ENCODE measurements at regions of chr11 and their contacts with region 1.

Region 1: DNA sequence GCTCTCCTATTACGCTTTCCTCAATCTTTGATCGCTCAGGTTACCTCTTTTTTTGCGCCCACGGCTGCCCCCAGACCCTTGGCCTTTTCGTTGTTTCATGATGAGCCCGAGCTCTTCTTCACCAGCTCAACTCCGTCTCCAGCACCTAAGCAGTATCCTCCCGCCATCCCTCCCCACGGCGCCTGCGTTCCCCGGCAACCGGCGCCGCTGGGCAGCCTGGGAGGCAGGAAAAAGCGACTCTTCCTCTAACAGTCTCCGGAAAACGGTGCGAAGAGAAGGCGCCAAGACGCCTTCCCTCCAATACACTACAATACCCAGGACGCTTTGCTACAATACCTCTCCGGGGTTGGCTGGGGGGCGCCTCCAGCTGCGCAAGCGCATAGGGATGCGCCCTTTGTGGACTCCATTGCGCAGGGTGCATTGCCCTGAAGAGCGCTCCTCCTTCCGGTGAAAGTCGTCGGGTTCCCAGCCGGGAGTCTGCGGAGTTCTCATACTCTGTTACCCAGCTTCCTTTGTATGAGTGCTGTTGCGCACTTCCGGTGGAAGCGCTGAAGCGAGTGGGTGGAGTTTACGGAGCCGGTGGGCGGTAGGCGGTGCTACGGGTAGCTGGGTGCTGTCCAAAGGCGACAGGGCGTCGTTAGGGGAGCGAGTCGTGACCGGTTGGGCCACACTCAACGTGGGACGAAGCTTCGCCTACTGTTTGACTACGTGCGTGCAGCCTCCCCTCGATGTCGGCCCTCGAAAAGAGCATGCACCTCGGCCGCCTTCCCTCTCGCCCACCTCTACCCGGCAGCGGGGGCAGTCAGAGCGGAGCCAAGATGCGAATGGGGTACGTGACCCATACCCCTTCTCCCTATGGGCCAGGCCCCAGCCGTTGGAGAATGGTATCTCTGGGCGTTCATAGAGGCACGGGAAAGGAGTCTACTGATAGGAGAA is at the starts of genes C2CD3 and PPME1:
- DNase-seq: peak; percentile 93 to 99 (median 98)
- ATAC-seq: peak; percentile 94 to 96
- H3K4me3 Mint-ChIP-seq: no peak within 1 kb of the TSS
- H3K27ac Mint-ChIP-seq: no peak within 1 kb of the TSS
- H3K4me1 Mint-ChIP-seq: peaks cover 5 to 29% (median 14%) of the 10 kb centered on the region in 4 donors
- H3K27me3 Mint-ChIP-seq: no peaks in the 10 kb centered on the region
- polyA plus RNA-seq, gene C2CD3: 4.1 to 12.1 (median 6.2) TPM
- polyA plus RNA-seq, gene PPME1: 10.3 to 14.2 (median 10.9) TPM

Region 2: GRCh38 chr11:73982969-73983740 is 187.8 kb before region 1 on chr11:
- POLR2A ChIA-PET with region 1: interaction called, 10 read pairs
- DNase-seq: peak; percentile 86 to 97 (median 92)
- ATAC-seq: peak; percentile 70 to 75
- H3K4me3 Mint-ChIP-seq: peak overlapping the region; percentile 95 to 100 (median 99)
- H3K27ac Mint-ChIP-seq: peak overlapping the region; percentile 98 to 100 (median 100)
- H3K4me1 Mint-ChIP-seq: peaks cover 26 to 59% (median 39%) of the 10 kb centered on the region in 4 donors
- H3K27me3 Mint-ChIP-seq: no peaks in the 10 kb centered on the region

Region 3: GRCh38 chr11:74132833-74133232 is 38.1 kb before region 1 on chr11:
- POLR2A ChIA-PET with region 1: no interaction called
- DNase-seq: no peak
- ATAC-seq: no peak
- H3K4me3 Mint-ChIP-seq: no peak overlapping the region
- H3K27ac Mint-ChIP-seq: no peak overlapping the region
- H3K4me1 Mint-ChIP-seq: no peaks in the 10 kb centered on the region
- H3K27me3 Mint-ChIP-seq: no peaks in the 10 kb centered on the region

Region 4: GRCh38 chr11:74232311-74232950 is 61.5 kb after region 1 on chr11:
- POLR2A ChIA-PET with region 1: interaction called, 12 read pairs
- DNase-seq: peak in 8 of 10 donors; percentile 5 to 70 (median 44)
- ATAC-seq: peak; percentile 98 to 99
- H3K4me3 Mint-ChIP-seq: peak overlapping the region in 8 of 10 donors; percentile 1 to 62 (median 26)
- H3K27ac Mint-ChIP-seq: peak overlapping the region in 8 of 10 donors; percentile 54 to 94 (median 89)
- H3K4me1 Mint-ChIP-seq: peaks cover 4 to 22% (median 14%) of the 10 kb centered on the region in 4 donors
- H3K27me3 Mint-ChIP-seq: no peaks in the 10 kb centered on the region

Measured in naive thymus-derived CD8-positive, alpha-beta T cell (primary cell).